ENCODE measurements at regions of chr1 and their contacts with region 1.

Region 1: DNA sequence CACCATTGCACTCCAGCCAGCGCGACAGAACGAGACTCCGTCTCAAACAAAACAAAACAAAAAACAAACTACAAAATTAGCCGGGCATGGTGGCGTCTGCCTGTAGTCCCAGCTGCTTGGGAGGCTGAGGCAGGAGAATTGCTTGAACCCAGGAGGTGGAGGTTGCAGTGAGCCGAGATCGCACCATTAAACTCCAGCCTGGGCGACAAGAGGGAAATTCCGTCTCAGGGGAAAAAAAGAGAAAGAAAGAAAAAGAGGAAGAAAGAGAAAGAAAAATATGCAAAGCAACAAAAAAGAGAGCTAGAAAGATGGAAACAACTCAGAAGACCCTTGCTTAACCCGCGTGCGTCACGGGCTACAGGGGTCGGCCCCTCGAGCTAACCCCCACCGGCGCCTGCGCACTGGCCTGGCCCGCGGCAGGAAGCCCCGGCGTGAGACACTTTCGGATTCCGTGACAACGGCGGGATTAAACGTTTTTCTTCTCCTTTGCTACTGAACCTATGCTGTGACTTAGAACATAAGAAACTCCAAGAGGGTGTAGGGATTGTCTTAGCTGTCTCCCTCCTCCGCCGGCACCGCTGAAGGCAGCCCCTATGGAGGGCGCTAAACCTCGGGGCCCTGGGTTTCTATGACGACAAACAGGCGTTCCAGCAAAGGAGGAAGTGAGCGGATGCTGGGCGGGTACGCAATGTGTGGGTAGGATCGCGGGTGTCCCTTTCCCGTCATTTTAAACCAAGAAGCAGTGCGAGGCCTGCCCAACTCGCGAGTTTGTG is at the start of gene AXDND1:
- DNase-seq: peak; percentile 79
- ATAC-seq: peak; percentile 97
- H3K4me3 ChIP-seq: peak within 1 kb of the TSS; percentile 67 to 83
- H3K27ac ChIP-seq: peak within 1 kb of the TSS; percentile 94
- H3K4me1 ChIP-seq: no peaks in the 10 kb centered on the region
- H3K27me3 ChIP-seq: no peaks in the 10 kb centered on the region
- CTCF ChIP-seq: no peak
- total RNA-seq, gene AXDND1: 0.31 TPM

Region 2: DNA sequence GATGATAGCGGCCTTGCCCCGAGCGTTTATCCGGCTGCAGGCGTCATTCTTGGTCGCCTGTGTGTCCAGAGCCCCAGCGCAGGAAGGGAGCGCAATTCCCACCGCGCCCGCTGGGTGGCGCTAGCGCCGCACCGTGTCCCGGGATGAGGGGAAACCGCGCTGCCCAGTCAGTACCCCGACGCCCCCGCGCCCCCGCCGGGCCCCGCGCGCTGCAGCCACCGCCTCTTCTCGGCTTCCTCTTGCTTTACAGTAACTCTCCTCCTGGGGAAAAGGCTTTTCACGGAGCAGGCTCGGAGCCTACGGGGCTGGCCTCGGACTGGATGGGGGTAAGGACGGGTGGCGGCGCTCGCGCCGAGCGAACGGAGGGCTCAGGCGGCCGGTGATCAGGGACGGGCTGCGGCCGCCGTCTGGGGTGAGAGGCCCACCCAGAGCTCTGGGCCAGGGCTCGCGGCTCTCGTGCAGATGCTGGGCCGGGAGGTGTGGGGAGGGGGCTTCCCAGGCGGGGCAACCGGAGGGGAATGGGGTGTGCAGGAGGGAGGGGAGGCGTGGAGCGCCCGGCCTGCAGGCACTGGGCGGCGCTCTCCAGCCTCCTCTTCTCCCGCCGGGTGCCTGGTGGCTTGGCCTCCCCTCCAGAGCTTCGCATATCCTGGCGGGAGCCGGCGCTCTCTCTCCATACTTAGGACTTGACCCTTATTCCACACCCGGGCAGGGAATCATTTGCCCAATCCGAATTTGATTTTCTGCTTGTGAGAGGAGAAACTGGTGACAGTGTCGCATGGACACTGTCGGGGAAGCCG is 822.7 kb before region 1 on chr1:
- CTCF ChIA-PET with region 1: no interaction called
- POLR2A ChIA-PET with region 1: no interaction called
- in situ Hi-C with region 1: no loop called
- intact Hi-C with region 1: loop called (anchors 5 kb)
- DNase-seq: no peak
- ATAC-seq: peak; percentile 90
- H3K4me3 ChIP-seq: peak overlapping the region; percentile 89 to 95
- H3K27ac ChIP-seq: peak overlapping the region; percentile 84
- H3K4me1 ChIP-seq: peaks cover 12% of the 10 kb centered on the region
- H3K27me3 ChIP-seq: no peaks in the 10 kb centered on the region
- CTCF ChIP-seq: peak; percentile 99

Region 3: GRCh38 chr1:179081687-179082332 is 283.7 kb before region 1 on chr1 and contains the start of gene TOR3A:
- CTCF ChIA-PET with region 1: no interaction called
- POLR2A ChIA-PET with region 1: no interaction called
- in situ Hi-C with region 1: no loop called
- intact Hi-C with region 1: loop called (anchors 2 kb)
- DNase-seq: peak; percentile 54
- ATAC-seq: peak; percentile 95
- H3K4me3 ChIP-seq: peak within 1 kb of the TSS; percentile 74 to 85
- H3K27ac ChIP-seq: peak within 1 kb of the TSS; percentile 91
- H3K4me1 ChIP-seq: peaks cover 5% of the 10 kb centered on the region; the same call in 1 of the 2 replicates
- H3K27me3 ChIP-seq: no peaks in the 10 kb centered on the region
- CTCF ChIP-seq: no peak
- total RNA-seq, gene TOR3A: 51.5 TPM

Region 4: DNA sequence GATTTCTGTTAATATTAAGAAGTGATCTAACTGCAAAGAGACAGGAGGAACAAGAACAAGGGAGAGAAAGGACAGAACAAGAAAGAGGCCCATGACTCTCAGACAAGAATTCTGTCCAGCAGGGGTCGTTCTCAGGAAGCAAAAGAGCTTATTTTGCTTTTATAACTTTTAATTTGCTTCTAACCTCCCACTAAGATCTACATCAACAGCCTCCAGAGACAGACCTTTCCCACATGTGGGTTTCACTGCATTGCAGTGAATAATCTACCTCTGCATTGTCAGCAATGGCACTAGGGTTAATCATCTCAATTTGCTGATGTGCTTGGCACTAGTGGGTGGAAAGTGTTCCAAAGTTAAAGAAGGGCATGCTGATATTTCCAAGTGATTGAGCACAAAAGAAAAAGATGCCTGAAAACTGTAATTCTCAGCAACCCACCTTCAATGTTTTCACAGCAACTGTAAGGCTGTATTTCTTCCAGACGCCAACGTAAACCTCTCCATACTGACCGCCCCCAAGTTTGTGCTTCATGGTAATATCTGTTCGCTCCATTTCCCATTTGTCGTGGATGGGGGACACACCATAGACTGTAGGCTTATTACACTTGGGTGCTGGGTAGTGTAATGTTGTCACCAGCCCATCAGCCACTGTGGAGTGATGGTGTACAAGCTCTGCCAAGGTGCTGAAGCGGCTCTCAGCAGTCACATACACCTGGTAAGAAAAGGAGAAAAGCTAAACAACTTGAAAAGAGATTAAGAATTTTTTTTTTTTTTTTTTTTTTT is 244.2 kb before region 1 on chr1:
- CTCF ChIA-PET with region 1: interaction called, 7 read pairs
- POLR2A ChIA-PET with region 1: no interaction called
- in situ Hi-C with region 1: no loop called
- intact Hi-C with region 1: loop called (anchors 5 kb)
- DNase-seq: no peak
- ATAC-seq: peak; percentile 66
- H3K4me3 ChIP-seq: no peak overlapping the region
- H3K27ac ChIP-seq: no peak overlapping the region
- H3K4me1 ChIP-seq: no peaks in the 10 kb centered on the region
- H3K27me3 ChIP-seq: no peaks in the 10 kb centered on the region
- CTCF ChIP-seq: peak; percentile 74; the same call in 1 of the 2 replicates

Region 5: GRCh38 chr1:179251675-179252074 is 113.8 kb before region 1 on chr1:
- CTCF ChIA-PET with region 1: no interaction called
- POLR2A ChIA-PET with region 1: no interaction called
- in situ Hi-C with region 1: no loop called
- intact Hi-C with region 1: loop called (anchors 2 kb)
- DNase-seq: peak; percentile 38
- ATAC-seq: peak; percentile 85; the same call in 1 of the 2 replicates
- H3K4me3 ChIP-seq: no peak overlapping the region
- H3K27ac ChIP-seq: no peak overlapping the region
- H3K4me1 ChIP-seq: no peaks in the 10 kb centered on the region
- H3K27me3 ChIP-seq: no peaks in the 10 kb centered on the region
- CTCF ChIP-seq: no peak; the same call in 1 of the 2 replicates

Region 6: GRCh38 chr1:179283992-179284391 is 81.5 kb before region 1 on chr1:
- CTCF ChIA-PET with region 1: no interaction called
- POLR2A ChIA-PET with region 1: interaction called, 17 read pairs
- in situ Hi-C with region 1: no loop called
- intact Hi-C with region 1: no loop called
- DNase-seq: no peak
- ATAC-seq: no peak
- H3K4me3 ChIP-seq: no peak overlapping the region
- H3K27ac ChIP-seq: no peak overlapping the region
- H3K4me1 ChIP-seq: no peaks in the 10 kb centered on the region
- H3K27me3 ChIP-seq: no peaks in the 10 kb centered on the region
- CTCF ChIP-seq: no peak

Measured in Panc1 (cell line).